Activated CD8-positive, alpha-beta T cell treated with anti-CD3 and anti-CD28 coated beads, Interleukin-2, amount 10 ng/mL, durations not matched to agents 7 days and 5 days (primary cell): ENCODE measurements at regions of chr17 and their contacts with region 1.

Region 1: DNA sequence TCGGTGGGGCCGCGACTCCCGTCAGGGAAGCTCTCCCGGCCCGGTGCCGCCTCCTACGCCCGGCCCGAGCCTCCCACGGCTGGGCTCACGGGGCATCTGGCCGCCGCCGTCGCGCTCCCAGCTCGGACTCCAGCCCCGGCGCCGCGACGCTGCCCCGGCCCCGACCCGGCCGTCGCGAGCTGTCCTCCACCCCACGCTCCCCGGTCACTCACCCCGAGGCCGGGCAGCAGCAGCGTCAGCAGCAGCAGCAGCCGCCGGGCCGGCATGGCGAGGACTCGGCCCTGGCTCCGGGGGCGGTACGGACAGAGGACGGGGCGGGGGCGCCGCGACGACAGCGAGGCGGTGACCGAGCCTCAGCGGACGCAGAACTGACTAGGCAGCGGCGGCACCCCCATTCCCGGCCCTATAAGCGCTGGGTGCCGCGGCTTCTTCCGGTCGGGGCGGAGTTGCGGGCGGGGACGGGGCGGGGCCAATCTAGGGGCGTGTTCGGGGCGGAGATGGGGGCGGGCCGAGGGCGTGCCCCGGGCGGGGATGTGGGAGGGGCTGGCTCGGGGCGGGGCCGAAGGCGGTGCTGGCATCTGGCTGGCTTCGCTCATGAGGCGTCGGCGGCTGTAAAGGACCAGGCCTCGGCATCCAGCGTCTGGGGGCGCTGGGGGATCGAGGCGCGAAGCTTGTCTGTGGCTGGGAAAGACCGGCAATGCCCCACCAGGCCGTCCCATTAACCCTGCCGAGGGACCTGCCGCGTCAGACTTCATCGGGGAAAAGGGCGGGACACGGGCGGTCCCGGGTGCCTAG is at the start of gene ERN1:
- DNase-seq: peak; percentile 93
- ATAC-seq: peak; percentile 94
- H3K4me3 Mint-ChIP-seq: peak within 1 kb of the TSS; percentile 92
- H3K27ac Mint-ChIP-seq: peak within 1 kb of the TSS; percentile 92
- H3K4me1 Mint-ChIP-seq: peaks cover 36% of the 10 kb centered on the region
- H3K27me3 Mint-ChIP-seq: no peaks in the 10 kb centered on the region
- total RNA-seq, gene ERN1: 13.0 to 17.9 TPM

Region 2: GRCh38 chr17:63911657-63912426 is 218.1 kb before region 1 on chr17:
- CTCF ChIA-PET with region 1: interaction called, 48 read pairs
- POLR2A ChIA-PET with region 1: no interaction called
- DNase-seq: peak; percentile 74
- ATAC-seq: peak; percentile 72
- H3K4me3 Mint-ChIP-seq: no peak overlapping the region
- H3K27ac Mint-ChIP-seq: no peak overlapping the region
- H3K4me1 Mint-ChIP-seq: no peaks in the 10 kb centered on the region
- H3K27me3 Mint-ChIP-seq: peaks cover 15% of the 10 kb centered on the region

Region 3: GRCh38 chr17:63998050-63998720 is 131.8 kb before region 1 on chr17 and contains the start of gene PRR29:
- CTCF ChIA-PET with region 1: interaction called, 27 read pairs
- POLR2A ChIA-PET with region 1: no interaction called
- DNase-seq: peak; percentile 79
- ATAC-seq: peak; percentile 83
- H3K4me3 Mint-ChIP-seq: peak within 1 kb of the TSS; percentile 84
- H3K27ac Mint-ChIP-seq: peak within 1 kb of the TSS; percentile 82
- H3K4me1 Mint-ChIP-seq: peaks cover 51% of the 10 kb centered on the region
- H3K27me3 Mint-ChIP-seq: peaks cover 18% of the 10 kb centered on the region
- total RNA-seq, gene PRR29: 0.97 to 1.3 TPM

Region 4: GRCh38 chr17:64051153-64051552 is 78.8 kb before region 1 on chr17:
- CTCF ChIA-PET with region 1: interaction called, 45 read pairs
- POLR2A ChIA-PET with region 1: interaction called, 8 read pairs
- DNase-seq: peak; percentile 48
- ATAC-seq: peak; percentile 96
- H3K4me3 Mint-ChIP-seq: peak overlapping the region; percentile 18
- H3K27ac Mint-ChIP-seq: peak overlapping the region; percentile 82
- H3K4me1 Mint-ChIP-seq: peaks cover 37% of the 10 kb centered on the region
- H3K27me3 Mint-ChIP-seq: no peaks in the 10 kb centered on the region

Region 5: DNA sequence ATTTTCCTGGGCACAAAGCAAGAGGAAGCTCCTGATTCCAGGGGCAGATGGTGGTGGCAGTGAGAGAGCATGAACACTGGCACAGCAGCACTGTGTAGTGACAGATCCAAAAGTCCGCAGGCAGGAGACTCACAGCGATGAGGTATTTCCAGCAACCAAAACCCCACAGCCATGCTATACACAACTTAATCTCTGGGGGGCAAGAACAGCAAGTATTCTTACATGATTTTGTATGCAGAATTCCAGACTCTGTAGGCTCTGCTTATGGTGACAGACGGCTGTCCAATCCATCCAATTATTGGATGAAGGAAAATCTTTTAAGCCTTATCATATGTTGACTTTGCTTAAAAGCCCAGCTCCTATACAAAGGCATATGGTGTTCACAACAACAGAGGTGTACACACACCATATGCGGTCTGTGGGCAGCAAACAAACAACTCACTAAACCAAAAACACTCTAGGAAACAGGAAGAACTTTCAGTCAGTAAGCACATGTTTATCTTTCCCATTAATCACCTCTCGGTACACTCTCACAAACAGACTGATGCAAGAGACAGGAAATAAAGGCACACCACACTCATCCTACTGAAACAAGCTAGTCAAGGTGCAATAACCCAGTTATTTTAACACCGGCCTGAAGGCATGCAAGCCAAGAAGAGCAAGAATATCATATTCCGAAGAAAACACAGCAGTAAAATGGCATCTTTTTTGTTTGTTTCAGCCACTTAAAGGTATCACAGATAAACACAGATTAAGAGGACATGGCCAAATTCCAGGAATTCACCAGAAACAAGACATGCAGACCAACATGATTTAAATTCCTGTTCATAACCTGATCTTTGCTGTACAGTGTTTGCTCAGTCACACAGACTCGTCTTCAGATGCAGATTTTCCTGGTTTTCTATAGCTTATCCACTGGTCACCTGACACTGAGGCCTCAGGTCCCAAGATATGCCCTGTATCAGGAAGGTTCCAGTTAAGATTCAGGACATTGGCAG is 47.9 kb before region 1 on chr17:
- CTCF ChIA-PET with region 1: interaction called, 58 read pairs
- POLR2A ChIA-PET with region 1: interaction called, 11 read pairs
- DNase-seq: peak; percentile 68
- ATAC-seq: peak; percentile 89
- H3K4me3 Mint-ChIP-seq: peak overlapping the region; percentile 51
- H3K27ac Mint-ChIP-seq: peak overlapping the region; percentile 87
- H3K4me1 Mint-ChIP-seq: peaks cover 16% of the 10 kb centered on the region
- H3K27me3 Mint-ChIP-seq: no peaks in the 10 kb centered on the region

Region 6: DNA sequence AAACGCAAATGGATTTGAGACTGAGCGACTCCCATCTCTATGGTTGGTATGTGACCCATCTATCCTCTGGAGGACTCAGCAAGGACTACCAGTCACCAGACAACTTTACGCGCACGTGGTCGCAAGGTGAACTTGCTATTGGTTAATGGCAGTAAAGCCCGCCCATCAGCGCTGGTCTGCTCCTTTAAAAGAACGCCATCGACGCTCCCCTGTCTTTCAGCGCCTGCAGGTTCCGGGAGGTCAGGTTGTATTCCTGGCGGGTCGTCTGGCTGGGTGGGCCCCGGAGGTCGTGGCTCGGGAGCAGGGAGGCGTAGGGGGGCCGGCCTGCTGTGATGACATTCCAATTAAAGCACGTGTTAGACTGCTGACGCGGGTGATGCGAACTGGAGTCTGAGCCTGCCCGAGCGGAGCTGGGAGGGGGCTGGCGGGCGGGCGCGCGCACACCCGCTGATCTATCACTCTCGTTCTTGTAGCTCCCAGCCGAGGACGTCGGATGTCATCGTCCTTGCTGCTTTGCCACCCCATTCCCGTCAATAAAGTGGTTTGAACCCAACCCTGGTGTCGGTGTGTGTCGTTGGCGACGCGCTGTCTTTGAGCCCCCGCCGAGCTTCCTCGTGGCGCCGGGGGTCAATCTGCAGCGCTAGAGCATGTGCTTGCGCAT is 15.9 kb after region 1 on chr17:
- CTCF ChIA-PET with region 1: interaction called, 78 read pairs
- POLR2A ChIA-PET with region 1: interaction called, 27 read pairs
- DNase-seq: peak; percentile 98
- ATAC-seq: peak; percentile 96
- H3K4me3 Mint-ChIP-seq: no peak overlapping the region
- H3K27ac Mint-ChIP-seq: no peak overlapping the region
- H3K4me1 Mint-ChIP-seq: peaks cover 26% of the 10 kb centered on the region
- H3K27me3 Mint-ChIP-seq: no peaks in the 10 kb centered on the region